Left ventricle myocardium inferior (tissue), 1 donor: ENCODE measurements at regions of chr17 and their contacts with region 1.

Region 1: GRCh38 chr17:48074315-48075081 is 26.3 kb downstream of the NFE2L1 start:
- DNase-seq: peak; percentile 62
- H3K4me3 ChIP-seq: no peak overlapping the region
- H3K27ac ChIP-seq: peak overlapping the region; percentile 34
- H3K4me1 ChIP-seq: peaks cover 10% of the 10 kb centered on the region
- H3K27me3 ChIP-seq: no peaks in the 10 kb centered on the region
- CTCF ChIP-seq: peak; percentile 90

Region 2: GRCh38 chr17:47831003-47831933 is 243.2 kb before region 1 on chr17 and contains the starts of genes LRRC46 and MRPL10:
- intact Hi-C with region 1: no loop called
- DNase-seq: peak; percentile 93
- H3K4me3 ChIP-seq: peak within 1 kb of the TSS; percentile 86
- H3K27ac ChIP-seq: peak within 1 kb of the TSS; percentile 84
- H3K4me1 ChIP-seq: peaks cover 50% of the 10 kb centered on the region
- H3K27me3 ChIP-seq: no peaks in the 10 kb centered on the region
- CTCF ChIP-seq: no peak
- total RNA-seq, gene LRRC46: 0.63 TPM
- total RNA-seq, gene MRPL10: 60.5 TPM

Region 3: GRCh38 chr17:47990962-47991731 is 83.4 kb before region 1 on chr17:
- intact Hi-C with region 1: no loop called
- DNase-seq: no peak
- H3K4me3 ChIP-seq: no peak overlapping the region
- H3K27ac ChIP-seq: no peak overlapping the region
- H3K4me1 ChIP-seq: peaks cover 26% of the 10 kb centered on the region
- H3K27me3 ChIP-seq: peaks cover 3% of the 10 kb centered on the region
- CTCF ChIP-seq: no peak

Region 4: GRCh38 chr17:48026502-48027321 is 47.8 kb before region 1 on chr17:
- intact Hi-C with region 1: loop called (anchors 2 kb)
- DNase-seq: peak; percentile 83
- H3K4me3 ChIP-seq: no peak overlapping the region
- H3K27ac ChIP-seq: peak overlapping the region; percentile 90
- H3K4me1 ChIP-seq: peaks cover 62% of the 10 kb centered on the region
- H3K27me3 ChIP-seq: peaks cover 27% of the 10 kb centered on the region
- CTCF ChIP-seq: peak; percentile 93